B cell (primary cell): ENCODE measurements at regions of chr17 and their contacts with region 1.

Region 1: GRCh38 chr17:76278952-76279741 is 14.0 kb downstream of the UBALD2 start:
- DNase-seq: peak; percentile 88
- ATAC-seq: peak; percentile 59
- H3K4me3 ChIP-seq: no peak overlapping the region
- H3K4me3 Mint-ChIP-seq: no peak overlapping the region
- H3K27ac ChIP-seq: no peak overlapping the region
- H3K27ac Mint-ChIP-seq: peak overlapping the region; percentile 37
- H3K4me1 ChIP-seq: peaks cover 24 to 30% of the 10 kb centered on the region in 2 donors
- H3K4me1 Mint-ChIP-seq: peaks cover 32% of the 10 kb centered on the region
- H3K27me3 ChIP-seq: no peaks in the 10 kb centered on the region
- H3K27me3 Mint-ChIP-seq: no peaks in the 10 kb centered on the region
- CTCF ChIP-seq: peak; percentile 98

Region 2: DNA sequence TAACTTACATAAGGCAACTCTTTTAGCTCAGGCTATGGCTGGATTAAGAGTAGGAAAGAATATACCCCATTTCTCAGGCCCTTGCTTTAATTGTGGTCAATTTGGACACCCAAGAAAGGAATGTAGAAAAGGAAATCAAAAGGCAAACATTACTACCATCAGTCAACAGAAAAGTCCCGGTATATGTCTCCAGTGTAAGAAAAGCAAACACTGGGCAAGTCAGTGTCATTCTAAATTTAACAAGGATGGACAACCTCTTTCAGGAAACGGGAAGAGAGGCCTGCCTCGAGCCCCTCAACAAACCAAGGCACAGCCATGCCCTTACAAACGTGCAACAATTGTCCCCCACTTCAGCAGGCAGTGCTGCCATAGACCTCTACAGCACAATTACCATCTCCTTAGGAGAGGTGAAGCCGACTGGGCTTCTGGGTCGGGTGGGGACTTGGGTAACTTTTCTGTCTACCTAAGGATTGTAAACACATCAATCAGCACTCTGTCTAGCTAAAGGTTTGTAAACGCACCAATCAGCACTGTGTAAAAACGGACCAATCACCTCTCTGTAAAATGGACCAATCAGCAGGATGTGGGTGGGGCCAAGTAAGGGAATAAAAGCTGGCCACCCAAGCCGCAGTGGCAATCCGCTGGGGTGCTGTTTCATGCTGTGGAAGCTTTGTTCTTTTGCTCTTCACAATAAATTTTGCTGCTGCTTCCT is 1254.3 kb before region 1 on chr17:
- CTCF ChIA-PET with region 1: no interaction called
- POLR2A ChIA-PET with region 1: no interaction called
- intact Hi-C with region 1: no loop called
- DNase-seq: no peak
- ATAC-seq: no peak
- H3K4me3 ChIP-seq: no peak overlapping the region
- H3K4me3 Mint-ChIP-seq: no peak overlapping the region
- H3K27ac ChIP-seq: no peak overlapping the region
- H3K27ac Mint-ChIP-seq: no peak overlapping the region
- H3K4me1 ChIP-seq: peaks cover 0 to 4% of the 10 kb centered on the region in 2 donors
- H3K4me1 Mint-ChIP-seq: peaks cover 4% of the 10 kb centered on the region
- H3K27me3 ChIP-seq: no peaks in the 10 kb centered on the region
- H3K27me3 Mint-ChIP-seq: no peaks in the 10 kb centered on the region
- CTCF ChIP-seq: no peak

Region 3: DNA sequence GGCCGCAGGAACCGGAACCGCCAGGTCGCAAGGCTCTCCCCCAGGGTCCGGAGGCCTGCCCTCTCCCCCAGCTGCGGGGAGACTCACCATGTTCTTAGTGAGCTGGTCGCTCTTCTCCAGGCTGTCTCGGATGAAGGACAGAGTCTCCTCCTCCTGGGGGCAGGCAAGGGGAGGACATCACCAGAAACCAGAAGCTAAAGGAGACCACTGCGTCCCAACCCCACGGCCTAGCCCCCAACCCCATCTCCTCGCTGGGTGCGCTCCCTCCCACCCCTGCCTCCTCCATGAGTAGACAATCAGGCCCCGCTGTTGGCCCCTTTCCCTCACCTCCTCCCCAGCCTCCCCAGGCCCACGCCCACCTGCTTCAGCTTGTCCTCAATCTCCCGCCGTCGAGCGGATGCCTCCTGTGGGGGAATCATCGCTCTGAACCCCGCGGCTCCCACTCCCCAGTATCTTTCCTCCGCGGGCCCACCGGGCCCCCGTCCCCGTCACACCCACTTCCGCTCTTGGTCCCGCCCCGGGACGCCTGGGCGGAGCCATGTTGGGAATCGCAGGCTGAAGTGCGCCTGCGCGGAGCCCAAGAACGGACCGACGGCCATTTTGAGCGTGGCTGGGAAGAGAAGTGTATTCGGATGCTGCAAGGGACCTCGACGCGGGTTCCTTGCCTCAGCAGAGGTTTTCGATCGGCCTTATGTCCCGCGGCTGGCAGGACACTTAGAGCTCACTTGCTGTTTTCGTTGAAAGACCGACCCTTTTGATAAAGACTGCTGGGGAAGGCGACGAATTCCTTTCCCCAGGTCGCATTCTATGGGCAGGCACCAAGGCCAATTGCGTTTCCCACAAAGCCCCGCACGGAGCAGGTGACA is 175.6 kb before region 1 on chr17 and contains the start of gene EXOC7:
- CTCF ChIA-PET with region 1: interaction called, 11 read pairs
- POLR2A ChIA-PET with region 1: no interaction called
- intact Hi-C with region 1: no loop called
- DNase-seq: peak; percentile 96
- ATAC-seq: peak; percentile 97
- H3K4me3 ChIP-seq: peak within 1 kb of the TSS; percentile 68 to 93 (median 90)
- H3K4me3 Mint-ChIP-seq: peak within 1 kb of the TSS; percentile 97
- H3K27ac ChIP-seq: peak within 1 kb of the TSS; percentile 76 to 82
- H3K27ac Mint-ChIP-seq: peak within 1 kb of the TSS; percentile 97
- H3K4me1 ChIP-seq: peaks cover 11 to 22% of the 10 kb centered on the region in 2 donors
- H3K4me1 Mint-ChIP-seq: peaks cover 21% of the 10 kb centered on the region
- H3K27me3 ChIP-seq: no peaks in the 10 kb centered on the region
- H3K27me3 Mint-ChIP-seq: no peaks in the 10 kb centered on the region
- CTCF ChIP-seq: no peak
- total RNA-seq, gene EXOC7: 191 and 194 TPM in 2 replicates

Region 4: DNA sequence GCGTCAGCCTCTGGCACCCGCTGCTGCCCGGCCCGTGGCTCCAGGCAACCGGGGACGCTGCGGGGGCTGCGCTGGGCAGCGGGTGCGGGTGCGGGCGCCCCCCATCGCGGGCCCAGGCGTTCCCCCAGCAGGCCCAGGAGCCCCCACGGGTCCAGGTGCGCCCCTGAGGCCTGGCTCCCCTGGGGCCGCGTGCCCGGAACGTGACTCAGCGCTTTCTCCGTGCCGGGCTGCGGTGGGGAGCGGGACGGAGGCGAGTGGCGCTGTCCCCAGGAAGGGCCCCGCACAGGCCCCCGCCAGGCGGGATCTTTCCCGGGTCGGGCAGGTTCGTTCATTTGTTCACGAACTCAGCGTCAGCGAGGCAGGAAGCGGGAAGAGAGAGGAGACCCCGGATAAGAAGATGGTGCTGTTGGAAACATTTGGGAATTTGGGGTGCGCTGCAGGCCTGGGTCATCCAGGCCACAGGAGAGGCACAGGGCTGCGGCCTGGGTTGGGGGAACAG is 157.2 kb before region 1 on chr17:
- CTCF ChIA-PET with region 1: interaction called, 435 read pairs
- POLR2A ChIA-PET with region 1: interaction called, 8 read pairs
- intact Hi-C with region 1: loop called (anchors 1 kb)
- DNase-seq: peak; percentile 49
- ATAC-seq: peak; percentile 11
- H3K4me3 ChIP-seq: peak overlapping the region in 4 of 5 experiments; percentile 32 to 66 (median 50)
- H3K4me3 Mint-ChIP-seq: peak overlapping the region; percentile 71
- H3K27ac ChIP-seq: no peak overlapping the region
- H3K27ac Mint-ChIP-seq: peak overlapping the region; percentile 53
- H3K4me1 ChIP-seq: peaks cover 18 to 21% of the 10 kb centered on the region in 2 donors
- H3K4me1 Mint-ChIP-seq: peaks cover 16% of the 10 kb centered on the region
- H3K27me3 ChIP-seq: peaks cover 0 to 6% (median 0%) of the 10 kb centered on the region in 4 experiments
- H3K27me3 Mint-ChIP-seq: peaks cover 2% of the 10 kb centered on the region
- CTCF ChIP-seq: no peak

Region 5: DNA sequence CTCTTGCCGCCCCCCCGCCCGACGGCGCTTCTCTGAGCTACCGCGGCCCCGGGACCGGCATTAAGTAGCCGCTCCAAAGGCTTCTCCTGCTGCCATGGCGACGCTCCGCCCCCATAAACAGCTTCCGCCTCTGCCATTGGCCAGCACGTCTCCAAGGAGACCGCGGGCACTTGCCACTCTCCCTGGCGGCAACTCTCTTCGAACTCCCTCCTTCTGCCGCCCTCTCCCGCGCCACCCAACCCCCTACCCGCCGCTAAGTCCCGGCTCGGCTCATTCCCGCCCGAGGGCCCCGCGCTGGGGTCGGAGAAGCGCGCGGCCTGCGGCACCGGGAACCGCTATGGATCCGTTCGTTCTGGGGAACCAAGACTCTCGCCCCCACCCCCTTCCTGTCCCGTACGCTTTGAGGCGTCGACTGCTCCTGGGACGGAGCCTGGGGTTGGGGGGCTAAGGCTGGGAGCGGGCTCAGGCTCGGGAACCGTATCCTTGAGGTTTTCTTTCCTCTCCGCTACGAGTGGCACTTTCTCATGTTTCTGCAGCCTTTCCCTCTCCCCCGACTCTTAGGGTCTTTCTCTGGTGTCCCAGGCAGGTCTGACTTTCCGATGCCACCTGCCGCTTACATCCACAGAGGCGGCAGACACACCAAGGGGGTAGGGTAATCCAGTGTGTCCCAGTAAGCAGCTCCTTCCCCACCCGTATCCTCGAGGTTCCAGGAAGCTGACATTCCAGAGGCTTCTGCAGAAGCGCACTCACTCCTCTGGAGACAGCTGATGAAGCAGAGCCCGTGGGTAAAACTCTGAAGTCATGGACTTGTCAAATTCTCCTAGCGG is 137.7 kb before region 1 on chr17 and contains the start of gene FOXJ1:
- CTCF ChIA-PET with region 1: interaction called, 9 read pairs
- POLR2A ChIA-PET with region 1: no interaction called
- intact Hi-C with region 1: loop called (anchors 1 kb)
- DNase-seq: peak; percentile 95
- ATAC-seq: peak; percentile 73
- H3K4me3 ChIP-seq: peak within 1 kb of the TSS in 4 of 5 experiments; percentile 55 to 81 (median 58)
- H3K4me3 Mint-ChIP-seq: peak within 1 kb of the TSS; percentile 90
- H3K27ac ChIP-seq: no peak within 1 kb of the TSS
- H3K27ac Mint-ChIP-seq: peak within 1 kb of the TSS; percentile 75
- H3K4me1 ChIP-seq: peaks cover 54 to 63% of the 10 kb centered on the region in 2 donors
- H3K4me1 Mint-ChIP-seq: peaks cover 54% of the 10 kb centered on the region
- H3K27me3 ChIP-seq: peaks cover 0 to 43% (median 11%) of the 10 kb centered on the region in 4 experiments
- H3K27me3 Mint-ChIP-seq: peaks cover 14% of the 10 kb centered on the region
- CTCF ChIP-seq: no peak
- total RNA-seq, gene FOXJ1: 0.12 and 0.20 TPM in 2 replicates

Region 6: DNA sequence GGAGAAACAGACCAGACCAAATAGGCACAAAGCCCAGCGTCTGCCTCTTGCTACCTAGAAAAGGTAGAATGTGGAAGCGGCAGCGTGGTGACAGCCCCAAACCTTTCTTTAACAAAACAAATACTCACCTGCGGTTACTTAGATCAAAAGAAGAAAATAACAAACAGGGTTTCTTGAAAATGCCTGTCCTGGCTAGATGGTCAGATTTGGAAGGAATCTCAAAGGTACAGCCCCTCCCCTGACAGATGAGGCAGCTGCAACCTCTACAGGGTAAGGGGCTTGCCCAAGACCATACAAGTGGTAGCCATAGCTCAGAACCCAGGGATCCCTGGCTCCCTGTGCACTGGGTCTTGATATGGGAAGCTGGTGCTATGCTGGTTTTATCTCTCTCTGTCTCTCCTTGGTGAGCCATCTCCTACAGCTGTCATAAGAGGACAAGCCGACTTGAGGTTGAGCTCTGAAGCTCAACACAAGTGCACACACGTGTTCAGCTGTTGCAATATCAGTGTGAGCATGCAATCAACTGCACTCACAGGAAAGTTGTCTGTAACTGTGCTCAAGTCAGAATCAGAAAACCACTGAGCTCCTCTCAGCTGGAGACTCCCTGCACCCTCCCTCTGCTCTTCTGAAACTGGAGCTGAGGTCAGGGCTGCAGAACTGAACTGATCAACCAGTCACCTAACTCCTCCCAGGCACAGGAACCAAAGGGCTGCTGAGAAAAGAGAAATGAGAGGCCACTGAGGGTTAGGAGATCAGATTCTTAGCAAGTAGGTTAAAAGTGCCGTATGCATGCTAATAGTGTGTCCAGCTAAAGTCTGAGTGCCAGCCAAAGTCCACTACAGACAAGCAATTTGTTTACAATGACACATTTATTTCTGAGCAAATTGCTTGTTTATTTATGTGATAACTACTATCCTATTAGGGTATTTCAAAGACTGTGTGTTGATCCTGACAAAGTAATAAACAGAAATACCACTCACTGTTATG is 32.8 kb before region 1 on chr17:
- CTCF ChIA-PET with region 1: interaction called, 15 read pairs
- POLR2A ChIA-PET with region 1: no interaction called
- intact Hi-C with region 1: no loop called
- DNase-seq: peak; percentile 53
- ATAC-seq: peak; percentile 84
- H3K4me3 ChIP-seq: no peak overlapping the region
- H3K4me3 Mint-ChIP-seq: peak overlapping the region; percentile 7
- H3K27ac ChIP-seq: no peak overlapping the region
- H3K27ac Mint-ChIP-seq: peak overlapping the region; percentile 41
- H3K4me1 ChIP-seq: peaks cover 13 to 18% of the 10 kb centered on the region in 2 donors
- H3K4me1 Mint-ChIP-seq: peaks cover 16% of the 10 kb centered on the region
- H3K27me3 ChIP-seq: peaks cover 0 to 29% (median 18%) of the 10 kb centered on the region in 4 experiments
- H3K27me3 Mint-ChIP-seq: peaks cover 25% of the 10 kb centered on the region
- CTCF ChIP-seq: no peak

Region 7: DNA sequence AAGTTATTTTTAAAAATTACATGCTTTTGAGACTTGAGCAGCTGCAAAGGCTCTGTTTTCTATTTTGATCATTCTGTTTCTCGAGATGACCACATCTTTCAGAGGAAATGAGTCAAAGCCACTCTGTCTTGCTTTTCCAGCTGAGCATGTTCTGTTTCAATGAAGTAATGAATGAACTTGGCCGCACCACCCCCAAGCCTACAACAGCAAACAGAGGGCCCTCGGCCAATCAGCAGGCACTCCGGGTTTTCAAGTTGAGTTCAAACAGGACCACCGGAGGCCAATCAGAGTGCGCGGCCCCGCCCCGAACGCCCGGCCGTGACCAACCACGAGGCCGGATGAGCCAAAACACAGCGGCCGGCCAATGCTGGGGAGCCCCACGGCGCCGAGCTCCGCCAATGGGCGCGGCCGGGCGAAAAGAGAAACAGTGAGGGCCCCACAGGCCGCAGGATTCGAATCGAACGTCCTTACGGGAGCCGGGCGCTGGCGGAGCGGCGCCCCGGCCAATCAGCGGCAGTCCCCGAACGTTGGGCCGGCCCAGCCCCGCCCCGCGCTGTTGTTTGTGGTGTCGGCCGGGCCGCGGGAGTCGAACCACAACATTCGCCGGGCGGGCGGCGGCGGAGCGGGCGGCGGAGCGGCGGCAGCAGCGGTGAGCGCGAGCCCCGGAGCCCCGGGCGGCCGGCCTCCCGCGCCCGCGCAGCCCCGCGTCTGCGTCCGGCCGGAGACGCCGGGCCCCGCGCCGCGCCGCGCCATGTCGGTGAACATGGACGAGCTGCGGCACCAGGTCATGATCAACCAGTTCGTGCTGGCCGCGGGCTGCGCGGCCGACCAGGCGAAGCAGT is 14.2 kb before region 1 on chr17 and contains the start of gene UBALD2:
- CTCF ChIA-PET with region 1: interaction called, 66 read pairs
- POLR2A ChIA-PET with region 1: interaction called, 44 read pairs
- intact Hi-C with region 1: loop called (anchors 2 kb)
- DNase-seq: peak; percentile 99
- ATAC-seq: peak; percentile 80
- H3K4me3 ChIP-seq: peak within 1 kb of the TSS; percentile 61 to 91 (median 88)
- H3K4me3 Mint-ChIP-seq: peak within 1 kb of the TSS; percentile 94
- H3K27ac ChIP-seq: peak within 1 kb of the TSS; percentile 77 to 94
- H3K27ac Mint-ChIP-seq: peak within 1 kb of the TSS; percentile 96
- H3K4me1 ChIP-seq: peaks cover 82 to 87% of the 10 kb centered on the region in 2 donors
- H3K4me1 Mint-ChIP-seq: peaks cover 74% of the 10 kb centered on the region
- H3K27me3 ChIP-seq: no peaks in the 10 kb centered on the region
- H3K27me3 Mint-ChIP-seq: no peaks in the 10 kb centered on the region
- CTCF ChIP-seq: no peak
- total RNA-seq, gene UBALD2: 78.9 and 84.8 TPM in 2 replicates

Region 8: GRCh38 chr17:76492989-76493501 is 213.9 kb after region 1 on chr17:
- CTCF ChIA-PET with region 1: no interaction called
- POLR2A ChIA-PET with region 1: no interaction called
- intact Hi-C with region 1: loop called (anchors 10 kb)
- DNase-seq: peak; percentile 83
- ATAC-seq: peak; percentile 50
- H3K4me3 ChIP-seq: peak overlapping the region; percentile 16 to 60 (median 50)
- H3K4me3 Mint-ChIP-seq: peak overlapping the region; percentile 89
- H3K27ac ChIP-seq: peak overlapping the region; percentile 75 to 94
- H3K27ac Mint-ChIP-seq: peak overlapping the region; percentile 98
- H3K4me1 ChIP-seq: peaks cover 87 to 98% of the 10 kb centered on the region in 2 donors
- H3K4me1 Mint-ChIP-seq: peaks cover 93% of the 10 kb centered on the region
- H3K27me3 ChIP-seq: no peaks in the 10 kb centered on the region
- H3K27me3 Mint-ChIP-seq: no peaks in the 10 kb centered on the region
- CTCF ChIP-seq: no peak